Left colon (tissue), 2 donors: ENCODE measurements at regions of chr9 and their contacts with region 1.

Region 1: GRCh38 chr9:98998441-98999151 is 54.9 kb downstream of the COL15A1 start:
- DNase-seq: peak; percentile 66 to 84
- ATAC-seq: peak; percentile 86

Region 2: GRCh38 chr9:98848450-98849149 is 150.0 kb before region 1 on chr9:
- intact Hi-C with region 1: loop called in 1 of 2 experiments (anchors 5 kb)
- DNase-seq: peak; percentile 91 to 94
- ATAC-seq: peak; percentile 98

Region 3: DNA sequence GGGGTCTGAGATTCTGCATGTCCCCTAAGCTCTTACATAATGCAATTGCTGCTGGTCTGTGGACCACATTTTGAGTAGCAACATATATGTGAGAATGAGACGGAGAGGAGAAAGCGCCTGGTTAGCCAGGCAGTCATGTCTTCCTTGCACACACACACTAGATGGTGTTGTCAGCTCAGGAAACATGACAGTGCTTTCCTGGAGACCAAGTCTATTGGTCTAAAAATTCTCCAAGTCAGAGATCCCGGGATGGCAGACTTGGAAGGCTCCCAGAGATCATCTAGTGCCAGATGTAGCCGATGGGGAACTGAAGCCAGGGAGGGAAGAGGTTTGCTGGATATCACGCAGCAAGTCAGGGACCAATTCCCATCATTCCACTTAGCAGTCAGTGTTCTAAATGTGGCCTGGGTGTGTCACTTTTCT is 137.7 kb before region 1 on chr9:
- intact Hi-C with region 1: loop called in 1 of 2 experiments (anchors 2 kb)
- DNase-seq: peak; percentile 32 to 67
- ATAC-seq: peak; percentile 43

Region 4: GRCh38 chr9:99140685-99141314 is 142.2 kb after region 1 on chr9:
- intact Hi-C with region 1: loop called in 1 of 2 experiments (anchors 5 kb)
- DNase-seq: peak in 1 of 2 donors; percentile 31
- ATAC-seq: peak; percentile 69

Region 5: DNA sequence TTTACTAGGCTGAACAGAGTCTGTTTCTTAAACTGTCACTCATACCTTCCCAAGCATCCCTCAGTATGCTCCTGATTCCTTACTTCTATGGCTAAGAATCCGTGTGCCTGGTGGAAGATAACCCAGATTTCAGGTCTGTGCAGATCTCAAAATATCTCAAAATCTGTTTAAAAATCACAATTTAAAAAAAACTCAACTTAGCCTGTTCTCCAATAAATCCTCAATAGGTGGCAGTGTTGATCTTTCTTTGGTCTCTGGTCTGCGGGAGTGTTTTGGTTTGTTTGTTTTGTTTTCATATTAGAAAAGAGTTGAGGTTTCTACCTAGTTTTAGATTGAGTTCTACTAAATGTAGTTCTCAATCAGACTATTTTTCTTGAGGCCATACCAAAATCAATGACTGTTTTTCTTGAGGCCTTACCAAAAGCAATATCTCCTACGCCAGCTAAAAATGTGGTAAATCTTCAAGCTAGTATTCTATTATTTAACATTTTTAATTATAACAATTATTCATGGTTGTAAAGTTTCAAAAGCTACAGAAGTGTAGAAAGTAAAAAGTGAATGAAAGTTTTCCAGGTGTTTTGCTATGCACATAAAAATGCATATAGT is 164.3 kb after region 1 on chr9:
- intact Hi-C with region 1: no loop called
- DNase-seq: no peak
- ATAC-seq: no peak